Natural killer cell (primary cell): ENCODE measurements at regions of chr5 and their contacts with region 1.

Region 1: DNA sequence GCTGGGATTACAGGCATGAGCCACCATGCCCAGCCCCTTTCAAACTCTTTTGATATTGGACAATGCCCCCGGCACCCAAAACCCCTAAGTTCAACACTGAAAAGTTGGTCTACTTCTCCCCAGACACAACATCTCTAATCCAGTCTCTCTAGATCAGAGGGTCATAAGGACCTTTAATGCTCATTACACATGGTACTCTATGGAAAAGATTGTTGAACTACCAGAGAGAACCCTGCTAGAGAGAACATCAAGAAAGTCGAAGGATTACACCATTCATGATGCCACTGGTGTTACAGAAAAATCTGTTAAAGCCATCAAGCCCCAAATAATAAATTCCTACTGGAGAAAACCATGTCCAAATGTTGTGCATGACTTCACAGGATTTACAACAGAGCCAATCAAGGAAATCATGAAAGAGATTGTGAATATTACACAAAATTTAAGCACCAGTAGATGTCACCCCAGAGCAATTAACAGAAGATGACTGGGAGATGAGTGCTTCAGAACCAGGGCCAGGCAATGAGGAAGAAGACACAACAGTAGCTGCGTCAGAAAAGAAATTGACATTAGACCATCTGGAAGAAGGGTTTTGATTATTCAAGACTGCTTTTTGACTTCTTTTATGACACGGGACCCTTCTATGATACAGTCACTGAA is 28.3 kb upstream of the NIPAL4 start:
- DNase-seq: peak in 1 of 2 donors; percentile 73
- ATAC-seq: peak; percentile 80 to 83 (median 82)
- H3K4me3 ChIP-seq: no peak overlapping the region
- H3K4me3 Mint-ChIP-seq: no peak overlapping the region
- H3K27ac ChIP-seq: no peak overlapping the region
- H3K27ac Mint-ChIP-seq: no peak overlapping the region
- H3K4me1 ChIP-seq: no peaks in the 10 kb centered on the region
- H3K4me1 Mint-ChIP-seq: no peaks in the 10 kb centered on the region
- H3K27me3 ChIP-seq: no peaks in the 10 kb centered on the region
- H3K27me3 Mint-ChIP-seq: peaks cover 18 to 53% of the 10 kb centered on the region in 2 donors
- CTCF ChIP-seq: peak; percentile 56

Region 2: DNA sequence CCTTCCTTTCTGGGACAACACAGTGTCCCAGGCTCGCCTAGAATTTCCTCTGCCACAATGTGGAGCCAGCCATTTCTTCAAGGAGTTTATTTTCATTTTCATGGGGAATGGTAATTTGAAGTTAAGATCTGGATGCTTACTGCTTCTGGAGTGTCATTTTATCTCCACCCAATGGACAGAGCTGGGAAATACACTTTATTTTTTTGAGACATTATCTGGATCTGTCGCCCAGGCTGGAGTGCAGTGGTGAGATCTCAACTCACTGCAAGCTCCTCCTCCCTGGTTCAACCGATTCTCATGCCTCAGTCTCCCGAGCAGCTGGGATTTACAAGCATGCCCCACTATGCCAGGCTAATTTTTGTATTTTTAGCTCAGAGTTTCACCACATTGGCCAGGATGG is 286.8 kb after region 1 on chr5:
- intact Hi-C with region 1: loop called (anchors 10 kb)
- DNase-seq: peak in 1 of 2 donors; percentile 68
- ATAC-seq: peak; percentile 67 to 81 (median 75)
- H3K4me3 ChIP-seq: no peak overlapping the region
- H3K4me3 Mint-ChIP-seq: no peak overlapping the region
- H3K27ac ChIP-seq: no peak overlapping the region
- H3K27ac Mint-ChIP-seq: no peak overlapping the region
- H3K4me1 ChIP-seq: no peaks in the 10 kb centered on the region
- H3K4me1 Mint-ChIP-seq: no peaks in the 10 kb centered on the region
- H3K27me3 ChIP-seq: no peaks in the 10 kb centered on the region
- H3K27me3 Mint-ChIP-seq: peaks cover under 1 to 2% of the 10 kb centered on the region in 2 donors
- CTCF ChIP-seq: peak; percentile 18

Region 3: DNA sequence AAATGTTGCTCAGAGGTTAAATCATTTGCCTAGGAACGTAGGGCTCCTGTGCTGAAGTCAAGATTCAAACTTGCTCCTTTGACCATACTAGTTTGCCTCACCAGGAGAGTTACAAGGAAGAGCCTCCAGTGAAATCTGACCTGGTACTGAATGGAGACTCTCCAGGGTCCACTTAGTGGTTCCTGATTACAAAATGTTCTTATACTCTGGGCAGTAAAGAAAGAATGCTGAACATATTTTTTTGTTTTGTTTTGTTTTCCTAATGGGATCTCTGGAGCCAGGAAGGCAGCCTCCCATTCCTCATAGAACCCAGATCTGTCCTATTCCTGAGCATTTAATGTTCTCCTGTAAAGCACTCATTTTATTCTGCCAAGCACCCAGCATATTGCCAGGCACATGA is 683.8 kb after region 1 on chr5:
- intact Hi-C with region 1: no loop called
- DNase-seq: no peak
- ATAC-seq: no peak
- H3K4me3 ChIP-seq: no peak overlapping the region
- H3K4me3 Mint-ChIP-seq: no peak overlapping the region
- H3K27ac ChIP-seq: no peak overlapping the region
- H3K27ac Mint-ChIP-seq: no peak overlapping the region
- H3K4me1 ChIP-seq: no peaks in the 10 kb centered on the region
- H3K4me1 Mint-ChIP-seq: no peaks in the 10 kb centered on the region
- H3K27me3 ChIP-seq: no peaks in the 10 kb centered on the region
- H3K27me3 Mint-ChIP-seq: peaks cover 5 to 26% of the 10 kb centered on the region in 2 donors
- CTCF ChIP-seq: no peak